ENCODE measurements at regions of chr18 and their contacts with region 1.

Region 1: DNA sequence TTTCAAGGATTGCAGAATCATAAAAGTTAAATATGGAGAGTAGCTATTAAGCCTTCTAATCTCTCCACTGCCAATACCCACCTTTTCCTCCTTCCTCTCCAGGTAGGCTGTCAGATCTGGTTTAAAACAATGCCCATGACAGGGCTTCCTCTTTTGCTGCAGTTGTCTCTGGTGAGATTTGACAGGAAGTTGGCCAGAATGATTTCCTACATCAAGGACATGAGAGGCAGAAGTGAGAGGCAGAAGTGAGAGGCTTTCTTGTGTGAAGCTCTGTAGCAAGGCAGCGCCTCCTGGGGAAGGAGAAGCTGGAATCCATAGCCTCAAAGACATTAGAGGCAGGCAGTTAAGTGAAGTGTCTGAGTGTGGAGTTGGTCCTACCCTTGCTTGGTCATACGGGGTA is 385.7 kb downstream of the HRH4 start:
- DNase-seq: no peak
- ATAC-seq: no peak
- H3K4me3 ChIP-seq: no peak overlapping the region
- H3K27ac ChIP-seq: no peak overlapping the region
- H3K4me1 ChIP-seq: no peaks in the 10 kb centered on the region
- H3K27me3 ChIP-seq: peaks cover 3% of the 10 kb centered on the region
- CTCF ChIP-seq: no peak

Region 2: DNA sequence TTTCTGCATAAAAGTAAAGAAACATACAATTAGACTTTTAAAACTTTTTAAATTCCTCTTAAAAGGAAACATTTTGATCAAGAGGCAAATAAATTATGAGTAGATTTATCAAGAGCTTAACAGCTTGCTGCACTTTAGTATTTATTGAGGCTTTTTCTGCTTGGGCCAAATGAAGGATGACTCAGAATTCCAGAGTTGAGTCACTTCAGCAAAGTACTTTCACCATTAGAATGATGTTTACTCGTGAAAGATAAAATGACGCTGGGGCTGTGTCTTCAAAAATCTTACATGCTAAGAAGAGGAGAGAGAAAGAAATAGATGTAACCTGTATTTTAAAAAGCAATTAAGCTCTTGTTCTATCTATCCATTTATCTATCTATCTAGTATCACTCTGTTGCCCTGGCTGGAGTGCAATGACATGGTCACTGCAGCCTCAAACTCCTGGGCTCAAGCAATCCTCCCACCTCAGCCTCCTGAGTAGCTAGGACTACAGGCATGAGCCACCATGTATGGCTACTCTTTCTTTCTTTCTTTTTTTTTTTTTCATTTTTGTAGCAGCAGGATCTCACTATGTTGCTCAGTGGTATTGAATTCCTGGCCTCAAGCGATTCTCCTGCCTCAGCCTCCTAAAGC is 1468.4 kb before region 1 on chr18:
- CTCF ChIA-PET with region 1: no interaction called
- POLR2A ChIA-PET with region 1: interaction called, 12 read pairs
- in situ Hi-C with region 1: no loop called
- intact Hi-C with region 1: no loop called
- DNase-seq: peak; percentile 42
- ATAC-seq: peak; percentile 65
- H3K4me3 ChIP-seq: no peak overlapping the region
- H3K27ac ChIP-seq: peak overlapping the region; percentile 78
- H3K4me1 ChIP-seq: peaks cover 42% of the 10 kb centered on the region
- H3K27me3 ChIP-seq: no peaks in the 10 kb centered on the region
- CTCF ChIP-seq: no peak

Region 3: DNA sequence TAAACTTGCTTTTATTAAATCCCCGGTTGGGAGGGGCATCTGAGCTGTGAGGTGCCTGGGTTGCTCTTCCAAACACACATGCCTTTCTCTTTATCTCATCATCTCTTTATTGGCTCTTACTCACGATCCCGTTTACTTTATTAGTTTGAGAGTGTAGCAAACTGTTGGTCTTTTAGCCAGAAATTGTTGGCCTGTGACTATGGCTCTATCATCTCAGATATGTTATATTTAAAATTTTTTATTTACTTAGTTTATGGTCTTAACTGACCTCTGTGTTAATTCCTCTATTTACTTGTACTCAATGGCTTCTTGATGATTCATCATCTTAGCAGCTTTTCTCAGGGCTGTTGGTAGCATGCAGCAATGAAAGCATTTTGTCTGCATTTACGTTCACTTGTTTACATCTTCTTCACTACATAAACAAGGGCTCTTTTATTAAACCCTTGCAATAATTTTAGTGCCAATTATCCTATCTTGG is 22.7 kb after region 1 on chr18:
- CTCF ChIA-PET with region 1: no interaction called
- POLR2A ChIA-PET with region 1: no interaction called
- in situ Hi-C with region 1: no loop called
- intact Hi-C with region 1: no loop called
- DNase-seq: peak; percentile 62
- ATAC-seq: peak; percentile 96
- H3K4me3 ChIP-seq: no peak overlapping the region
- H3K27ac ChIP-seq: no peak overlapping the region
- H3K4me1 ChIP-seq: peaks cover 13% of the 10 kb centered on the region; the same call in 1 of the 2 replicates
- H3K27me3 ChIP-seq: no peaks in the 10 kb centered on the region
- CTCF ChIP-seq: no peak

Region 4: GRCh38 chr18:24937639-24938275 is 91.6 kb after region 1 on chr18:
- CTCF ChIA-PET with region 1: no interaction called
- POLR2A ChIA-PET with region 1: no interaction called
- in situ Hi-C with region 1: no loop called
- intact Hi-C with region 1: no loop called
- DNase-seq: no peak
- ATAC-seq: peak; percentile 48; the same call in 1 of the 2 replicates
- H3K4me3 ChIP-seq: no peak overlapping the region
- H3K27ac ChIP-seq: no peak overlapping the region
- H3K4me1 ChIP-seq: no peaks in the 10 kb centered on the region
- H3K27me3 ChIP-seq: no peaks in the 10 kb centered on the region
- CTCF ChIP-seq: no peak

Measured in Panc1 (cell line).